Activated CD4-positive, alpha-beta memory T cell treated with anti-CD3 and anti-CD28 coated beads, Interleukin-2, amount 10 ng/mL, durations not matched to agents 7 days and 5 days (primary cell): ENCODE measurements at regions of chr4 and their contacts with region 1.

Region 1: DNA sequence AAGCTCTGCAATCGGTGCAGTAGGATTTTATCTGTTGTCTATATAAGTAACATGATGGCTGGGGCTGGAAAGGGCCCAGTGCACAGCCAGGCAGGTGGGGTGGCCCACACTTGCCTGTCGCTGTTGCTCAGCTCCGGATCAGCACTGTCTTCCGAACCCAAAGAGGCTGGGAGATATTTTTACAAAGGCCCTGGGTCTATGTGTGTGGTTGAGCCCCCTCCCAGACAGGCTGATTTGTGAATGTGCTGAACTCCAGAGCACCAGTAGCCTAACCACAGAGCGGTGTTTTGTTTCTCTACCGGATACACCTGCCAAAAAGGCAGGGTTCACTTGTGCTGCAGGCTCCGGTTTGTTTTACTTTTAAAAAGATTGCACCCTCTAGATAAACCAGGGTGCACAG is 33.5 kb upstream of the CHRNA9 start:
- DNase-seq: peak; percentile 70
- H3K4me3 Mint-ChIP-seq: peak overlapping the region; percentile 45
- H3K27ac Mint-ChIP-seq: peak overlapping the region; percentile 94
- H3K4me1 Mint-ChIP-seq: peaks cover 76% of the 10 kb centered on the region
- H3K27me3 Mint-ChIP-seq: no peaks in the 10 kb centered on the region

Region 2: GRCh38 chr4:40289366-40290188 is 12.0 kb before region 1 on chr4:
- CTCF ChIA-PET with region 1: interaction called, 17 read pairs
- POLR2A ChIA-PET with region 1: interaction called, 22 read pairs
- DNase-seq: no peak
- H3K4me3 Mint-ChIP-seq: peak overlapping the region; percentile 40
- H3K27ac Mint-ChIP-seq: peak overlapping the region; percentile 87
- H3K4me1 Mint-ChIP-seq: peaks cover 39% of the 10 kb centered on the region
- H3K27me3 Mint-ChIP-seq: no peaks in the 10 kb centered on the region